ENCODE measurements at regions of chr15 and their contacts with region 1.

Region 1: GRCh38 chr15:54941417-54941816 is 255.3 kb downstream of the RSL24D1 start:
- DNase-seq: no peak
- ATAC-seq: no peak
- H3K4me3 ChIP-seq: no peak overlapping the region
- H3K27ac ChIP-seq: no peak overlapping the region
- H3K4me1 ChIP-seq: no peaks in the 10 kb centered on the region
- H3K27me3 ChIP-seq: no peaks in the 10 kb centered on the region
- CTCF ChIP-seq: no peak
- POLR2A ChIP-seq: no peak

Region 2: GRCh38 chr15:54884312-54884711 is 57.1 kb before region 1 on chr15:
- intact Hi-C with region 1: loop called in 1 of 10 experiments (anchors 10 kb)
- DNase-seq: no peak
- ATAC-seq: no peak
- H3K4me3 ChIP-seq: no peak overlapping the region
- H3K27ac ChIP-seq: peak overlapping the region in 1 of 12 donors; percentile 37
- H3K4me1 ChIP-seq: peaks cover 0 to 7% (median 0%) of the 10 kb centered on the region in 12 donors
- H3K27me3 ChIP-seq: no peaks in the 10 kb centered on the region
- CTCF ChIP-seq: no peak
- POLR2A ChIP-seq: no peak

Region 3: GRCh38 chr15:54917312-54917711 is 24.1 kb before region 1 on chr15:
- intact Hi-C with region 1: loop called in 1 of 10 experiments (anchors 5 kb)
- DNase-seq: no peak
- ATAC-seq: peak in 2 of 4 donors; percentile 58 to 62
- H3K4me3 ChIP-seq: no peak overlapping the region
- H3K27ac ChIP-seq: no peak overlapping the region
- H3K4me1 ChIP-seq: no peaks in the 10 kb centered on the region
- H3K27me3 ChIP-seq: no peaks in the 10 kb centered on the region
- CTCF ChIP-seq: no peak
- POLR2A ChIP-seq: no peak

Measured in heart left ventricle (tissue), 16 donors.